Activated naive CD4-positive, alpha-beta T cell treated with anti-CD3 and anti-CD28 coated beads for 36 hours (primary cell): ENCODE measurements at regions of chr1 and their contacts with region 1.

Region 1: DNA sequence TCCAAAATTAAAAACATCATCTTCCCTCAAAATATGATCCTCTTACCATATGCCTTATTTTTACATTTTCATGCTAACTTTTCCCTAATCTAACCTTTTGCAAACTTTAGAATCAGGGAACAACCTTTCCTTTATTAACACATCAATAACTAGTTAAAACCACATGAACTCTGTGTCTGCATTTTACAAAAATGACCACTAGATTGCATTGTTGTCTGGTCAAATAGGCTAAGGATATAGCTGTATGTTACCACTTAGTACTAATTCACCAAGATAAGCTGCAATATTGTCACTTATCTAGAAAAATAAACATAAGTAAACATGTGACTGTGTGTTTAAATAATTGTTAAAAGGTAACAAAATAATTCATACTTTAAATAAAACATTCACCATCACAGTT is 82.3 kb downstream of the DENND1B start:
- DNase-seq: no peak
- H3K4me3 Mint-ChIP-seq: no peak overlapping the region
- H3K27ac Mint-ChIP-seq: no peak overlapping the region
- H3K4me1 Mint-ChIP-seq: peaks cover 17% of the 10 kb centered on the region
- H3K27me3 Mint-ChIP-seq: no peaks in the 10 kb centered on the region

Region 2: DNA sequence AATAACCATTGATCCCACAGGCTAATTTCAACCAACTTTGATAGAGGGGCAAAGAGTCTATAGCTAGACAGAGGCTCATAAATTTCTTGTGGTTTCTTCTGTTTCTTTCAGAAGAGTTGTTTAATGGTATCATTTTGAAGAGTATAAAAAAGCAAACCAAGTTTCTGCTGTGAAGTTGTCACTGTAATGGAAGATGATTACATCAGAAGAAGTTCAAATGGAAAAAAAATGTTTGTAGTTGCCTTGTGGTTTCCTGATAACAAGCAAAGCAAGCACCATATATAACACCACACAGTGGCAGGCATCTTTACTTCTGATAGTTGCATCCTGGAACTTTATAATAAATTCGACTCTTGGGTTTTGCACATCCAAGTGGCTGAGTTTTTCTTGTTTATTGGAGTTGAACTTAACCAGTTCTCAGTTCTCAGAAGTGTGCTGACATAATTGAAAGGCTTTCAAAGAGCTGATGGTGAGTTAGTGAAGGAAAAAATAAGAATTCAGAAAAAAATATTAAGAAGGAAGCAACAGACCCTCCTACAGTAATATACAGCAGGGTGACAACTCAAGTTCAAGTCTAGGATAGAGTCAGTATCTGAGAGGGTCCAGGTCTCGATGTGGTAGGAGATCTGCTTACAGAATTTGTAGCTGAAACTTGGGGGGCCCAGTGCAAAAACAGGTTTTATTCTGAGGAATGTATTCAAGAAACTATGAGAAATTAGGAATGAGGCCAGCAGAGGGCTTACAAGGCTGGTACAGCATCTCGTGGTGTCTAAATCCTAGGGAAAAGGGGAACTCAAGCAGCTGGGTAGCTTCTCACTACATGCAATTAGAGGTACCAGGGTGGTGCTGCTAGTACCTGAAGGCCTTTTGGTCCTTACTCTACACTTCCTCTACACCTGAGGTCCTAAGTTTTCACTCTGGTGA is 301.4 kb before region 1 on chr1:
- CTCF ChIA-PET with region 1: no interaction called
- intact Hi-C with region 1: no loop called
- DNase-seq: no peak
- H3K4me3 Mint-ChIP-seq: no peak overlapping the region
- H3K27ac Mint-ChIP-seq: peak overlapping the region; percentile 50
- H3K4me1 Mint-ChIP-seq: peaks cover 33% of the 10 kb centered on the region
- H3K27me3 Mint-ChIP-seq: no peaks in the 10 kb centered on the region

Region 3: GRCh38 chr1:197413564-197413963 is 279.4 kb before region 1 on chr1:
- CTCF ChIA-PET with region 1: no interaction called
- intact Hi-C with region 1: no loop called
- DNase-seq: no peak
- H3K4me3 Mint-ChIP-seq: no peak overlapping the region
- H3K27ac Mint-ChIP-seq: no peak overlapping the region
- H3K4me1 Mint-ChIP-seq: peaks cover 3% of the 10 kb centered on the region
- H3K27me3 Mint-ChIP-seq: no peaks in the 10 kb centered on the region

Region 4: GRCh38 chr1:197761621-197762020 is 68.7 kb after region 1 on chr1:
- CTCF ChIA-PET with region 1: no interaction called
- intact Hi-C with region 1: loop called (anchors 5 kb)
- DNase-seq: no peak
- H3K4me3 Mint-ChIP-seq: no peak overlapping the region
- H3K27ac Mint-ChIP-seq: no peak overlapping the region
- H3K4me1 Mint-ChIP-seq: peaks cover 34% of the 10 kb centered on the region
- H3K27me3 Mint-ChIP-seq: no peaks in the 10 kb centered on the region

Region 5: GRCh38 chr1:198771563-198772153 is 1078.7 kb after region 1 on chr1:
- CTCF ChIA-PET with region 1: no interaction called
- intact Hi-C with region 1: no loop called
- DNase-seq: no peak
- H3K4me3 Mint-ChIP-seq: no peak overlapping the region
- H3K27ac Mint-ChIP-seq: no peak overlapping the region
- H3K4me1 Mint-ChIP-seq: peaks cover 5% of the 10 kb centered on the region
- H3K27me3 Mint-ChIP-seq: no peaks in the 10 kb centered on the region